ENCODE measurements at regions of chr7 and their contacts with region 1.

Region 1: GRCh38 chr7:83271212-83272099 is 108.8 kb upstream of the PCLO start:
- DNase-seq: no peak
- ATAC-seq: no peak

Region 2: DNA sequence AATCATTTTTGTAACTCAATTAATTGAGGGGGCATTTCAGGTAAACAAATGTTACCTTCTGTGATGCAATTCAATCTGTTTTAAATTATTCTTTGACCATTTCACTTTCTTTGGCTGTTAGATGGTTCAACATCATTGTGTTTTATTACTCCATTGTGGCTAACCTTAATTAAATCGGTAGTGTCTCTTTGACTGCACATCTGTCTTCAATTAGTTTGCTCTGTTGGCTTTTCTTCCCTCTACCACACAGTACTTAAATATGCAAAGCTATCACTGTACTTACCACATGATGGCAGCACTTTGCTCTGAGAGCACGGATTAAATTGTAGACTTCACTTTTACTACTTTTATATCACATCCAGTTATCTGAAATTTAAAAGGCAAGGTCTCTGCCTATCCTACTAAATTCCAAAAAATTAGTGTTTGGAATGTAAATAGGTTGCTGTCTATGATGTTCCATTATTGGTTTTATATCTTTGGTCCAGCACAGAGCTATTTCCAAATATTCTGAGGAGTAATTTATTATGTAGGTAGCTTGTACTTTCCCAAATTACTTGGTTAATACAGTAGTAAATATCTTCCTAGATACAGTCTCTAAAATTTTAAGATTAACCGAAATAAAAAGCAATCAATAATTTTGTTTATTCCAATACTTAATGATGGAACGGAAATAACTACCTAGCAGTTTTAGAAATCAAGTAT is 460.7 kb before region 1 on chr7:
- intact Hi-C with region 1: loop called (anchors 5 kb)
- DNase-seq: no peak
- ATAC-seq: no peak

Region 3: DNA sequence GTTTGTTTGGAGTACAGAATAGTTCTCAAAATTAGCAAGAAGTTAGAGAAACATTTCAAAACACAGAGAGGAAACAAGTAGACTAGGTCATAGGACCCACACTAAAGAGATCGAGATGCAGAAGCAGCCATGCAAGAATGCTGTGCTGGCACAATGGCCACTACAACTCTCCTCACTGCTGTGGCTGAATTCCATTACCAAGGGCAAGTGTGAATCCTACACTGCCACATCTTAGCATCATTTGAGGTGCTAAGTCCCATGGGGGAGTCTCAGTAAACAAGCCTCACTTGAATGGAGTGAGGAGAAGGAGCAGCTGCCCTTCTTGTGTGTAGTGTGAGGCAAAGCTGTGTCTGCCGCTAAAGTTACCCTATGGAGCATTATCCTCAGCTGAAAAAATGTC is 165.5 kb before region 1 on chr7:
- intact Hi-C with region 1: no loop called
- DNase-seq: no peak
- ATAC-seq: no peak

Region 4: DNA sequence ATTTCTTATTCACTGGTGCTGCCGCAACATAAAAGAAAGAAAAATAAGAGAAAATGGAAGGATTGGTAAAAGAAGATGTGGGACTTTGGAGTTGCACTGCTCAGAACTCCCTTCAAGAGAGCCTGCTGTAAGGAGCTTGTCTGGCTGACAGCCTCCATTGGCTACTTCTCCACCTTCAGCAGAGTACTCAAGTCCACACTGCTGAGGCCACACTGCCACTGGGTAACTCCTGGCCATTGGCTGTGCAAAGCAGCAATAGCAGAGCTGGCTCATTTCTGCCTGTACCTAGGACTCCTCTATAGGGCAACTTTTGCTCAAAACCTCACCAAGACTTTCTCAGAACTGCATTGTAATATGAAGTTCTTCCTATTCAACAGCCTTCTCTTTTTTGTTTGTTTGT is 70.1 kb before region 1 on chr7:
- intact Hi-C with region 1: no loop called
- DNase-seq: no peak
- ATAC-seq: no peak

Region 5: DNA sequence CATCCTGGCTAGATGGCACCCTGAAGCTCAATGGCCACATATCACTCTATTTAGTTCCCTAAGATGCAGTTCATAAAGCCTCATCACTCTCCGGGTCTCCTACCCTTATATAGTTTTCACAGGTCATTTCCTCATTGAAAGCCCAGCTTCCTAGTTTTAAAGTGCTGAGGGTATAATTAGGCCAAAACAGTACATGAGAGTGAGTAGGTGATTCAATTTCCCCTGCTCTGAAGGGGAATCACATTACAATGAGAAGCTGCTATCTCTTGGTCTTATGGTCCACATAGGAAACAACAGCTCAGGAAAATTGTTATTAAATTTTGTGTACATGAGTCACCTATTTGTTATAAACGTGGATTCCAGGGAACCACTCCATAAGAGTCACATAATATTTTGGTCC is 215.5 kb after region 1 on chr7:
- intact Hi-C with region 1: no loop called
- DNase-seq: no peak
- ATAC-seq: no peak